Left cardiac atrium (tissue), 4 donors: ENCODE measurements at regions of chr2 and their contacts with region 1.

Region 1: GRCh38 chr2:241877989-241878970 is 8.8 kb downstream of the RTP5 start:
- DNase-seq: peak; percentile 78
- ATAC-seq: peak in 1 of 2 donors; percentile 15

Region 2: DNA sequence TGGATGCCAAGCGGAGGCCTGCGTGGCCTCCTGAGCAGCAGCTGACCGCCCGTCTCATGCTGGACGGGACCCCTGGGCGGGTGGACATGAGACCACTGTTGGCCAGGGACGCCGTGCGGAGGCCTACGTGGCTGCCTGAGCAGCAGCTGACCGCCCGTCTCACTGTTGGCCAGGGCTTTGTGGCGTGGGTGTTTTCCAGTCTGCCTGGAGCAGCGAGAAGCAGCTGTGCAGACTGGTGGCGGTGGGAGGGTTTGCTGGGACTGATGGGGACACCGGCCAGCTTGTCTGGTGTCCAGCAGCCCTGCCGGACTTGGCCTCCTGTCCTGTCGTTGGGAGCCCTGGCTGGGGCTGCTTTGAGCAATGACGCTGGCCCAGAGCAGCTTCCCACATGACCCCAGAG is 149.7 kb before region 1 on chr2:
- intact Hi-C with region 1: loop called in 1 of 2 experiments (anchors 5 kb)
- DNase-seq: peak; percentile 82
- ATAC-seq: peak; percentile 86 to 89